ENCODE measurements at regions of chr9 and their contacts with region 1.

Region 1: DNA sequence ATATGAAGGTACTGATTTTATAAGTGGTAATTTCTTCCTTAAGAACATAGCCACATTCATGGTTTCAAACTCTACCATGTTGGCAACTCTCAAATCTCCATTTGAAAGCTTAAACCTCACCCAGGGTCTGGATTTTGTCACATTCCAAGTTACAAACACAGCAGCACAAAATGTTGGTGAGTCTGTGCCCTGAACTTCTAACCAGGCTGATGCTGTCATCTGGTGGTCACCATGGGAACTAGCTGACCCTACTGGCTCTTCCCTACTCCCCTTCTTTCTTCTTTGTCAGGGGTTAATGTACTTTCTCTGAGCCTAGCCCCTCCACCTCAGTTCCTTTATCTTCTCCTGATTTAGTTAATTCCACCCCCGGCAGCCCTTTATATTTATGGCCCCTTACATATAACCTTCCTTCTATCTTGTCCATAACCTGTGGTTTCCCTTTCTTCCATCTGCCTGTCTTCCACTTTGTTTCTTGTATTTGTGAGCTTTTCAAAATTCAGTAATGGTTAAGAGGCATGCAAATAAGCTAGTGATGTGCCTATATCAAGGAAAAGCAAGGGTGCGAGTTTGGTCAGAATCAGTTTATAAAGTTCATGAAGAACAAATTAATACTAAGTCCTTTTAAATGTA is 35.9 kb downstream of the TGFBR1 start:
- DNase-seq: peak in 1 of 2 donors; percentile 82
- ATAC-seq: peak; percentile 77 to 96 (median 90)
- H3K4me3 ChIP-seq: no peak overlapping the region
- H3K4me3 Mint-ChIP-seq: peak overlapping the region; percentile 45
- H3K27ac ChIP-seq: peak overlapping the region; percentile 14
- H3K27ac Mint-ChIP-seq: peak overlapping the region; percentile 84 to 90
- H3K4me1 ChIP-seq: peaks cover 7% of the 10 kb centered on the region
- H3K4me1 Mint-ChIP-seq: peaks cover 60 to 69% of the 10 kb centered on the region in 2 donors
- H3K27me3 ChIP-seq: no peaks in the 10 kb centered on the region
- H3K27me3 Mint-ChIP-seq: no peaks in the 10 kb centered on the region
- CTCF ChIP-seq: peak; percentile 92

Region 2: DNA sequence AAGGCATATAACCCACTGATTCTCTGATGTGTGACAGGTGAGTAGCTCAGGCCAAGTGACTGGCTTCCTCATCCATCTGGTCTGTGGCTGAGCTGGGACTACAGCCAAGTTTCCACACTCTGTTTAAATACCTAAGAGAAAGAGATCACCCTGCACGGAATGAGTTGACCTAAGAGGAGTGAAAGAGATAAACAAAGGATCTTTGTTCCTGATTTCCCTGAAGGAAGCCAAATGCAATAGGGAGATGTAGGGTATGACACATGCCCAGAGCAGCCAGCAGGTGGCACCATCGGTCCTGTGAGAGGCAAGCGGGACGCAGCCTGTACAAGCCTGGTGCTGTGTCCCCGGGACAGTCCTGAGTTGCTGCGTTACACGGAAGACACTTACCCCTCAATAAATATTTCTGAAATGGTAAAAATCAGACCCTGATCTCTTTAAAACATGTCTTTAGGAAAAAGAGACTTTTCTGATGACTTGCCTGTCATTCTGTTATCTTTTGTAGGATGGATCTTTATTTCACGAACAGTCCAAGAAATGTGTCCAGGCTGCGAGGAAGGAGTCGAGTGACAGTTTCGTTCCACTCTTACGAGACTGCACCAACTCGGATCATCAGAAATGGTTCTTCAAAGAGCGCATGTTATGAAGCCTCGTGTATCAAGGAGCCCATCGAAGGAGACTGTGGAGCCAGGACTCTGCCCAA is 292.2 kb before region 1 on chr9:
- intact Hi-C with region 1: loop called (anchors 2 kb)
- DNase-seq: peak; percentile 61 to 85
- ATAC-seq: peak; percentile 88 to 99 (median 92)
- H3K4me3 ChIP-seq: no peak overlapping the region
- H3K4me3 Mint-ChIP-seq: no peak overlapping the region
- H3K27ac ChIP-seq: no peak overlapping the region
- H3K27ac Mint-ChIP-seq: no peak overlapping the region
- H3K4me1 ChIP-seq: no peaks in the 10 kb centered on the region
- H3K4me1 Mint-ChIP-seq: peaks cover 0 to 9% of the 10 kb centered on the region in 2 donors
- H3K27me3 ChIP-seq: no peaks in the 10 kb centered on the region
- H3K27me3 Mint-ChIP-seq: no peaks in the 10 kb centered on the region
- CTCF ChIP-seq: peak; percentile 92

Region 3: GRCh38 chr9:98974994-98975712 is 165.6 kb before region 1 on chr9:
- intact Hi-C with region 1: loop called (anchors 1 kb)
- DNase-seq: peak; percentile 78 to 86
- ATAC-seq: peak; percentile 90 to 100 (median 99)
- H3K4me3 ChIP-seq: no peak overlapping the region
- H3K4me3 Mint-ChIP-seq: peak overlapping the region; percentile 50
- H3K27ac ChIP-seq: no peak overlapping the region
- H3K27ac Mint-ChIP-seq: no peak overlapping the region
- H3K4me1 ChIP-seq: peaks cover 10% of the 10 kb centered on the region
- H3K4me1 Mint-ChIP-seq: peaks cover 7 to 10% of the 10 kb centered on the region in 2 donors
- H3K27me3 ChIP-seq: peaks cover 7% of the 10 kb centered on the region
- H3K27me3 Mint-ChIP-seq: peaks cover 12 to 16% of the 10 kb centered on the region in 2 donors
- CTCF ChIP-seq: peak; percentile 93

Region 4: DNA sequence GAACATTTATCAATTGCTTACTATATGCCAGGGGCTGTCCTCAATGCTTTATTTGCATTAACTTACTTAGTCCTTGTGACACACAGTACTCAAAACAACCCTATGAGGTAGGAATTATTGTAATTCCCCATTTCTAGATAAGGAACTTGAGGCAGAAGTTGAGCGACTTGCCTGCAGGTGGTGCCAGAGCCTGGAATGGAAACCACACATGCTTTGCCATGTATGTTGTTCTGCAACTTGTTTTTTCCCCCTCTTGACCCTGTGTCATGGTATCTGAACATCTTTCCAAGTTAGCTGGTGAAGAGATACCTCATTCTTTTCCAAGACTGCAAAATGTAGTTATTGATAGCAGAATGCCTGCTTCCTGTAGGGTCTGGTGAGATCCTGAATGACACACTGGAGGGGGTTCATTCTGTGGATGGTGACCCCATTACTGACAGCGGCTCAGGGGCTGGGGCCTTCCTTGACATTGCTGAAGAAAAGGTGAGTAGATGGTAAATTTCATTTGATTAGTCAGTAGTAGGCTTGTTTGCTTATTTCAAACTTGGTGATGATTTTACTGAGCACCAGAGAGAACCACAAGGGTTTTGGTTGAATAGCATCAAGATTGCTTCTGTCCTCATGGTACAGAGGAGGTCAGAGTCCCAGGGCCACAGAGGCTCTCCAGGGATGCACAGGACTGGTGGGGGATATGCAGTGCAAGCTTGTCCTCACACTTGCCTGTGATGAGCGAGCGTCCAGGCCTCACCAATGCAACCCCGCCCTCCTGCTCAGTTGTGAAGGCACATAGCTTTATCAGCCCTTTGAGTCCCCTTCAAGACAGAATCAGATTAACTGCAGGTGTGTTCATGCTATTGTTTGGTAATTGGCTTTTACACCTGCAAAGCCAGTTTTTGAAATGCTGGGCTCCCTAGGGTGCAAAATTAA is 140.1 kb before region 1 on chr9:
- intact Hi-C with region 1: loop called (anchors 1 kb)
- DNase-seq: peak; percentile 47 to 83
- ATAC-seq: peak; percentile 59 to 90 (median 80)
- H3K4me3 ChIP-seq: no peak overlapping the region
- H3K4me3 Mint-ChIP-seq: no peak overlapping the region
- H3K27ac ChIP-seq: no peak overlapping the region
- H3K27ac Mint-ChIP-seq: peak overlapping the region in 1 of 2 donors; percentile 54
- H3K4me1 ChIP-seq: peaks cover 19% of the 10 kb centered on the region
- H3K4me1 Mint-ChIP-seq: peaks cover 46 to 47% of the 10 kb centered on the region in 2 donors
- H3K27me3 ChIP-seq: no peaks in the 10 kb centered on the region
- H3K27me3 Mint-ChIP-seq: peaks cover 6 to 7% of the 10 kb centered on the region in 2 donors
- CTCF ChIP-seq: peak; percentile 76

Measured in natural killer cell (primary cell).